ENCODE measurements at regions of chr2 and their contacts with region 1.

Region 1: GRCh38 chr2:196239622-196240587 is 68.5 kb upstream of the STK17B start:
- DNase-seq: peak; percentile 85
- H3K4me3 Mint-ChIP-seq: peak overlapping the region; percentile 62
- H3K27ac Mint-ChIP-seq: peak overlapping the region; percentile 97
- H3K4me1 Mint-ChIP-seq: peaks cover 66% of the 10 kb centered on the region
- H3K27me3 Mint-ChIP-seq: no peaks in the 10 kb centered on the region

Region 2: DNA sequence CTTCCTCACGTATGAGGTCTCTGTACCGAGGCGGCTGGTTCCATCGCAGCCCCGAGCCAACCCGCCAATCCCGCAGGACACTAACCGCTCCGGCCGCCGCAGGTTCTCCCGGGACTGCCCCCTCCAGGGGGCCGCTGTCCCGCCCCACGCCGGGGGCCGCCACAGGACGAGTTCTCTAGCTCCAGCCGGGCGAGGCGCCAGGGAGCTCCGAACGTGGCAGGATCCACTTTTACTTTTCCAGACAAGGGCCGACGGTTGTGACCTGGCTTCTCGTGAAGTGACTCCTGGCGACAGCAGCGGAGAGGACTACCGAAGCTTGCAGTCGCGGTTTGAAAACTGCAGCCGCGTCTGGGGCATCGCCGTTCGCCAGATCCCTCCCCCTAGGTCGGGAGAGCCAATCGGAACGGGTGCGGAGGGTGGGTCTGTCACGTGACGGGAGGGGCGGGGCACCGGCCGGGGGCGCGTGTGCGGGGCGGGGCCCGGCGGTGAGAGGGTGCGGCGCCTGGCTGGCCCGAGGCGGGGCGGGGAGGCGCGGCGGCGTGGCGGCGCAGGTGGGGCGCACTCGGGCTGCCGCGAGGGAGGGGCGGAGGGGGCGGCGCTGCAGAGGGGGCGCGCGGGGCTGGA is 68.5 kb before region 1 on chr2 and contains the start of gene STK17B:
- intact Hi-C with region 1: loop called (anchors 1 kb)
- DNase-seq: peak; percentile 94
- H3K4me3 Mint-ChIP-seq: peak within 1 kb of the TSS; percentile 96
- H3K27ac Mint-ChIP-seq: peak within 1 kb of the TSS; percentile 93
- H3K4me1 Mint-ChIP-seq: peaks cover 44% of the 10 kb centered on the region
- H3K27me3 Mint-ChIP-seq: no peaks in the 10 kb centered on the region
- total RNA-seq, gene STK17B: 176 and 178 TPM in 2 replicates

Region 3: GRCh38 chr2:196200557-196200956 is 39.3 kb before region 1 on chr2:
- intact Hi-C with region 1: loop called (anchors 5 kb)
- DNase-seq: peak; percentile 34
- H3K4me3 Mint-ChIP-seq: peak overlapping the region; percentile 26
- H3K27ac Mint-ChIP-seq: peak overlapping the region; percentile 75
- H3K4me1 Mint-ChIP-seq: peaks cover 44% of the 10 kb centered on the region
- H3K27me3 Mint-ChIP-seq: no peaks in the 10 kb centered on the region

Region 4: DNA sequence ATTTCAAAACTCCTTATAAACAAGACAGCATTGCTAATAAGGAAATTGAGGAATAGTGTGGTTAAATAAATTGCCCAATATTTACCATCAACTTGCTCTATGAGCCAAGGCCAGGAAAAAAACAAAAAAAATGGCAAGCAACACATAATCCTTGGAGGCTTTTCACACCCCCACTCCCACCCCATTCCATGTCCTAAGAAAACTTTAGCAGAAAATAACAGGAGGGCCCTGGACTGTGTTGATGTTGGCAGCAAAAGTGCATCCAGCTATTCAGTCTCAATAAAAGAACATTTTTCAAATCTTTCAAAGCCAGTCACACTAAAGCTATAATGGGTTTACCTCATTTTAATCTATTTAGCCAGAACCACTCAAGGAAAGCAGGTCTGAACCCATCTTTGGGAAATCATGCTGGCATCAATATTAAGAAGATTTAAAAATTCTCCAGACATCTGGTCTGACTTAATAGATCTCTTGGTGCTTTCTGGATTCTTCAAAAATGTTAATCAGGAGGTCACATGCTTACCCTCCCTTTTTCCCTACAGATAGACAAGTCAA is 33.9 kb before region 1 on chr2:
- intact Hi-C with region 1: loop called (anchors 1 kb)
- DNase-seq: no peak
- H3K4me3 Mint-ChIP-seq: no peak overlapping the region
- H3K27ac Mint-ChIP-seq: no peak overlapping the region
- H3K4me1 Mint-ChIP-seq: peaks cover 41% of the 10 kb centered on the region
- H3K27me3 Mint-ChIP-seq: no peaks in the 10 kb centered on the region

Region 5: GRCh38 chr2:196220671-196221070 is 19.2 kb before region 1 on chr2:
- intact Hi-C with region 1: no loop called
- DNase-seq: no peak
- H3K4me3 Mint-ChIP-seq: no peak overlapping the region
- H3K27ac Mint-ChIP-seq: no peak overlapping the region
- H3K4me1 Mint-ChIP-seq: peaks cover 35% of the 10 kb centered on the region
- H3K27me3 Mint-ChIP-seq: no peaks in the 10 kb centered on the region

Region 6: DNA sequence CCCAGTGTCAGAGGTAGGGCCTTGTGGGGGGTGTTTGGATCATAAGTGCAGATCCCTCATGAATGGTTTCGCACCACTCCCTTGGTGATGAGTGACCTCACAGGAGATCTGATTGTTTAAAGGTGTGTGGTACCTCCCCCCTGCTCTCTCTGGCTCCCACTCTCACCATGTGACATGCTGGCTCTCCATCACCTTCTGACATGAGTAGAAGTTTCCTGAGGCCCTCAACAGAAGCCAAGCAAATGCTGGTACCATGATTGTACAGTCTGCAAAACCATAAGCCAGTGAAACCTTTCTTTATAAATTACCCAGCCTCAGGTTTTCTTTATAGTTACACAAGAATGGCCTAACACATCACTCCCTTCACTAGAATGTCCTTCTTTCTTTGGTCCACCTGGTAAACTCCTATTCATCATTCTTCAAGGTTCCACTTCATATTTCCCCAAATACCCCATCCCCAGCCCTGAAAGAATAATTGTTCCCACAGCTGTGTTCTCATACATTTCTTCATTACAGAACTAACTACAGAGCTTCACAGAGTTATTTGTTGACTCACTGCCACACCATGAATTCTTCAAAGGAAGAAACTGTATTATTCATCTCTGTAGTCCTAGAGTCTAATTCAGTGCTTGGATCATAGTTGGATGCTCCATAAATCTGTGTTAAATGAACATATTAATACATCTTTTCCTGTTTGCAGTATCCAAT is 12.7 kb after region 1 on chr2:
- intact Hi-C with region 1: loop called (anchors 1 kb)
- DNase-seq: no peak
- H3K4me3 Mint-ChIP-seq: no peak overlapping the region
- H3K27ac Mint-ChIP-seq: peak overlapping the region; percentile 71
- H3K4me1 Mint-ChIP-seq: peaks cover 61% of the 10 kb centered on the region
- H3K27me3 Mint-ChIP-seq: no peaks in the 10 kb centered on the region

Region 7: DNA sequence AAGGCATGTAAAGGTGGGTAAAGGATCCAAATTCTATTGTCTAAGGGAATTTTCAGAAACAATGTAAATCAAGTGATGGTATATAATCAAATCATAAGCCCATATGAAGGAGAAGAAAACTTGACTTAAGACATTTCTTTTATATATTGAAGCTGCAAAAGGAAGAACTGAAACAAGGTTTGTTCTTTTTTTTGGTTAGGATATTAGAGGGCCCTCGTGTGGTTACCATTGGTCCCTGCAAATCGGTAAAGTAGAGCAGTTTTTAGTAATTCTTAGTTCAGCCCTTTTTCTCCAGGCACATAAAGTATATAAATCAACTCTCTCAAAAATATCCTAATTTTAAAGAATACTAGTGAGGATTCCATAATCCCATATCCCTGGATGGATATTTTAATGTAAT is 37.1 kb after region 1 on chr2:
- intact Hi-C with region 1: loop called (anchors 1 kb)
- DNase-seq: no peak
- H3K4me3 Mint-ChIP-seq: no peak overlapping the region
- H3K27ac Mint-ChIP-seq: no peak overlapping the region
- H3K4me1 Mint-ChIP-seq: peaks cover 45% of the 10 kb centered on the region
- H3K27me3 Mint-ChIP-seq: no peaks in the 10 kb centered on the region

Region 8: GRCh38 chr2:196399722-196400691 is 160.1 kb after region 1 on chr2:
- intact Hi-C with region 1: no loop called
- DNase-seq: no peak
- H3K4me3 Mint-ChIP-seq: no peak overlapping the region
- H3K27ac Mint-ChIP-seq: no peak overlapping the region
- H3K4me1 Mint-ChIP-seq: no peaks in the 10 kb centered on the region
- H3K27me3 Mint-ChIP-seq: no peaks in the 10 kb centered on the region

Region 9: DNA sequence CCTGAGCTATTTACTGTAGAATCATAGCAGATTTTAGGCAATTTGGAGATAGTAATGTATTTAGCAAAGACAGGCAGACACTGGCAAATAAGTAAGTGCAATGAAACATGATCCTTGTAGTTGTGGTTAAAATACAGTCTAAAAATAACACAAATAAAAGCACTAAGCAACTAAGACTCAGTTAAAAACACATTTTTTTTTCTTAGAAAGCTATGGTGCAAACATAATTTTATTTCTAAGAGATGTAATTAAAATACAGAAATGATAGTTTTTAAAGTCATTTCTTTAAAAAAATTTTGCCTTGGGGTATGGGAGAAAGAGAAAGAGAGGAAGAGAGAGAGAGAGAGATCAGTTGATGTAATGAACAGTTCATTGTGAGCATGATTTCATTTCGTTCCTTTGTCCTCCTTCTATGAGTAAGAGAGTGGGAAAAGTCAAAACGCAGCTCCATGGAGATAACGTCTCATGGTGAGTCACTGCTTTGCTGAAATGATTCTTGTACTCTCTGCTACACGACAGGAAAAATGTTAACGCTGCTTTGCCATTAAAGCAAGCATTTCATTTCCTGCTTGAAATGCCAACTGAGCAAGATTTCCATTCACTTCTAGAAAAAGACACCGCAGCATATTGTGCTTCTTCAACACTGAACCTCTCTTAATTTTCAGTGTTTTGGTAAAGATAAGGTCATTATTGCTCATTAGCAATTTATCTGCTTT is 747.9 kb after region 1 on chr2:
- intact Hi-C with region 1: loop called (anchors 10 kb)
- DNase-seq: peak; percentile 35
- H3K4me3 Mint-ChIP-seq: peak overlapping the region; percentile 54
- H3K27ac Mint-ChIP-seq: peak overlapping the region; percentile 86
- H3K4me1 Mint-ChIP-seq: peaks cover 57% of the 10 kb centered on the region
- H3K27me3 Mint-ChIP-seq: no peaks in the 10 kb centered on the region

Measured in activated T-helper 2 cell treated with anti-CD3 and anti-CD28 coated beads, Interferon-gamma antibody, Interleukin-2, Interleukin-4, amounts not matched to agents 10 μg/mL and 5 μg/mL and 100 μg/mL, durations not matched to agents 14 hours and 24 hours and 36 hours (primary cell).